GM23248 (cell line): ENCODE measurements at regions of chr21 and their contacts with region 1.

Region 1: GRCh38 chr21:46368533-46369285 is 44.8 kb downstream of the PCNT start:
- DNase-seq: no peak
- H3K4me3 ChIP-seq: no peak overlapping the region
- H3K27ac ChIP-seq: no peak overlapping the region
- H3K4me1 ChIP-seq: no peaks in the 10 kb centered on the region
- H3K27me3 ChIP-seq: no peaks in the 10 kb centered on the region

Region 2: GRCh38 chr21:44939532-44940115 is 1429.1 kb before region 1 on chr21 and contains the start of gene SLX9:
- in situ Hi-C with region 1: no loop called
- DNase-seq: peak; percentile 91
- H3K4me3 ChIP-seq: peak within 1 kb of the TSS; percentile 79
- H3K27ac ChIP-seq: peak within 1 kb of the TSS; percentile 33
- H3K4me1 ChIP-seq: peaks cover 15% of the 10 kb centered on the region
- H3K27me3 ChIP-seq: no peaks in the 10 kb centered on the region
- total RNA-seq, gene SLX9: 25.6 and 34.3 TPM in 2 replicates

Region 3: GRCh38 chr21:46150491-46151121 is 218.1 kb before region 1 on chr21:
- in situ Hi-C with region 1: no loop called
- DNase-seq: no peak
- H3K4me3 ChIP-seq: no peak overlapping the region
- H3K27ac ChIP-seq: no peak overlapping the region
- H3K4me1 ChIP-seq: no peaks in the 10 kb centered on the region
- H3K27me3 ChIP-seq: no peaks in the 10 kb centered on the region

Region 4: GRCh38 chr21:46424039-46424591 is 55.4 kb after region 1 on chr21:
- in situ Hi-C with region 1: loop called (anchors 10 kb)
- DNase-seq: no peak
- H3K4me3 ChIP-seq: no peak overlapping the region
- H3K27ac ChIP-seq: no peak overlapping the region
- H3K4me1 ChIP-seq: no peaks in the 10 kb centered on the region
- H3K27me3 ChIP-seq: no peaks in the 10 kb centered on the region